Motor neuron (in vitro differentiated cells): ENCODE measurements at regions of chr11 and their contacts with region 1.

Region 1: GRCh38 chr11:113314389-113315301 is at the start of gene TTC12:
- ATAC-seq: peak in 7 of 8 experiments; percentile 89 to 95 (median 92)
- H3K4me3 ChIP-seq: peak within 1 kb of the TSS; percentile 35 to 80 (median 67)
- H3K27ac ChIP-seq: peak within 1 kb of the TSS; percentile 9 to 59
- H3K4me1 ChIP-seq: peaks cover 22 to 37% of the 10 kb centered on the region in 2 donors
- total RNA-seq, gene TTC12: 4.1 to 26.7 (median 8.6) TPM in 7 of 8 experiments, not detected in the other

Region 2: DNA sequence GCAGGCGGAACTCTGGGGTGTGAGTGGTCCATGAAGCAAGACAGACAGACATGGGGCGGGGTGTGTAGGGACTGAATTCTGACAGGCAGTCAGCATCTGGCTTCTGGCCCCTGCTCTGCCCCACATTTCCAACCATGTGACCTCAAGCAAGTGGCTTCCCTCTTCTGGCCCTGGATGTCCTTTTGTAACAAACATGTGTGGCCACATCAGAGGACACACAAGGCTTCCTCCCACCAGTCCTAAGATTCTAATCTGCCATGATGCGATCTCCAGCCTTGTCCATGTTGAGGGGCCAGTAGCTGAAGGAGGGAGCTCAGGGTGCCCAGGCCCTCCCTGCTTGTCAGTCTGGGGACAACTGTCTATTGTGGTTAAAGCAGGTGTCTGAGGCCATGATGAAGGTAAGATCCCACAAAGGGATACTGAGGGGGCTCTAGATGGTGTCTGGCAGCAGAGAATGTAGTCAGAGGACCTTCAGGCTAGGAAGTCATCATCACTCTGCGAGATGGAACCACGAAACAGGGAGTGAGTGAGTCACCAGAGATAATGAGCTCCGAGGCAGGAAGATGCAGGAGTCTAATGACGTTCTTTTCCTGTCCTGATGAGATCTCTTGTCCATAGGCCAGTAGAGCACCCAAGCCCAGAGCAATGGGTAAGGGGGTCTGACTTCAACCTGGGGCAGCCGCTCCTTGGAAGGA is 133.1 kb after region 1 on chr11:
- in situ Hi-C with region 1: loop called in 1 of 9 experiments (anchors 25 kb)
- ATAC-seq: peak in 7 of 8 experiments; percentile 53 to 91 (median 79)
- H3K4me3 ChIP-seq: no peak overlapping the region
- H3K27ac ChIP-seq: peak overlapping the region in 1 of 2 donors; percentile 18
- H3K4me1 ChIP-seq: peaks cover 6 to 15% of the 10 kb centered on the region in 2 donors

Region 3: DNA sequence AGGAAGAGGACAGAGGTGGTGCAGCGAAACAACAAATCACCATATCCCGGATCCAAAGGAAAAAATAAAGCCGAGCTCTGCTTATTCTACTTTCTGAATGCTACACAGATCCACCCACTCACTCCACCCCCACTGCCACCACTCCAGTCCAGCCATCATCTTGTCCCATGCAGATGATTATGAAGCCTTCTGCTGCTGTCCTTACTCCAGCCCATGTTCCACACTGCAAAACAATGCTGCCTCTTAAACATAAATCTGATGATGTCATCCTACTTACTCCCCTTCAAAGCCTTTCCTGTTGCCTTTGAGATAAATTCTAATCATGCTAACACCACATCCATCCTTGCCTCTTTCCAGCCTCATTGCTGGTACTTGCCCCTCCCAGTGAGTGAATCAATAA is 167.0 kb after region 1 on chr11:
- in situ Hi-C with region 1: no loop called
- ATAC-seq: peak in 7 of 8 experiments; percentile 39 to 92 (median 84)
- H3K4me3 ChIP-seq: no peak overlapping the region
- H3K27ac ChIP-seq: peak overlapping the region; percentile 65 to 70
- H3K4me1 ChIP-seq: peaks cover 24 to 38% of the 10 kb centered on the region in 2 donors

Region 4: GRCh38 chr11:113532697-113533424 is 218.2 kb after region 1 on chr11:
- in situ Hi-C with region 1: loop called (anchors 5 to 25 kb)
- ATAC-seq: peak; percentile 65 to 97 (median 78)
- H3K4me3 ChIP-seq: no peak overlapping the region
- H3K27ac ChIP-seq: no peak overlapping the region
- H3K4me1 ChIP-seq: no peaks in the 10 kb centered on the region

Region 5: GRCh38 chr11:113587308-113587739 is 272.7 kb after region 1 on chr11:
- in situ Hi-C with region 1: no loop called
- ATAC-seq: peak in 2 of 8 experiments; percentile 24 to 67
- H3K4me3 ChIP-seq: no peak overlapping the region
- H3K27ac ChIP-seq: no peak overlapping the region
- H3K4me1 ChIP-seq: no peaks in the 10 kb centered on the region

Region 6: DNA sequence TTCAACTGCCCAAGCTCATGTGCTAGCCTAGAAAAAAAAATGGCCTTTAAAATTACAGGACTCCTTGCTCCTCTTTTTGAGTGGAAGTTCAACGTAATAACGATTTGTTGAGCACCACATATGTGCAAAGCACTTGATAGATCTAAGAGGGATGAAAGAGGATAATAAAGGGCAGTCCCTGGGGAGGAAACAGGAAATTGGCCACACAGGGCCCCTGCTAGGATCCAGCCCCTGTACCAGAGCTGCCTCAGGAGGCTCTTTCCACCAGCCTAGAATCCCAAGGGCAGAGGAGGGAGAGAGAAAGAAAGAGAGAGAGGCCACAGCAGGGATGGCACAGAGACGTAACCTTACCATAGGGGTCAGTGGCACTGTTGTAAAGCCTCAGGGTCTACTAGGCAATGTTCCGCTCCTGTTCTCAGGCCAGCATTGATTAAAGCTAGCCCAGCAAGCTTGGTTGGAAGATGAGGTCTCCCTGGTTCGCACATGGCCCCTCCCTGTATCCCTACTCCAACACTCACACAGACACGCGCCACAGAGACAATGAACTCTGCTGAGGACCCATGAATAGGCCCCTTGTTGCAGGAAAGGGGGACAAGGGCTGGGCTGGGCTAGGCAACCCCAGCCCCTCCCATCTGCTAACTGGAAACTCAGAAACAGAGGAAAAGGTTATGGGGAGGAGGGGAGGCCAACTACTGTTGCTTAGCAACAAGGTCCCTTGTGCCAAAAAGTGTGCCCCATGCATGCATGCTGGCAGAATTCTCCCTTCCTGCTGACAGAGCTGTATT is 391.4 kb after region 1 on chr11 and contains the start of gene TMPRSS5:
- in situ Hi-C with region 1: loop called in 1 of 9 experiments (anchors 25 kb)
- ATAC-seq: peak in 5 of 8 experiments; percentile 99
- H3K4me3 ChIP-seq: no peak within 1 kb of the TSS
- H3K27ac ChIP-seq: peak within 1 kb of the TSS in 1 of 2 donors; percentile 46
- H3K4me1 ChIP-seq: peaks cover 10 to 18% of the 10 kb centered on the region in 2 donors
- total RNA-seq, gene TMPRSS5: 0.36 to 6.2 (median 1.7) TPM

Region 7: GRCh38 chr11:113730887-113731726 is 416.5 kb after region 1 on chr11:
- in situ Hi-C with region 1: loop called in 4 of 9 experiments (anchors 25 kb)
- ATAC-seq: peak; percentile 60 to 87 (median 74)
- H3K4me3 ChIP-seq: no peak overlapping the region
- H3K27ac ChIP-seq: no peak overlapping the region
- H3K4me1 ChIP-seq: peaks cover 7 to 20% of the 10 kb centered on the region in 2 donors

Region 8: DNA sequence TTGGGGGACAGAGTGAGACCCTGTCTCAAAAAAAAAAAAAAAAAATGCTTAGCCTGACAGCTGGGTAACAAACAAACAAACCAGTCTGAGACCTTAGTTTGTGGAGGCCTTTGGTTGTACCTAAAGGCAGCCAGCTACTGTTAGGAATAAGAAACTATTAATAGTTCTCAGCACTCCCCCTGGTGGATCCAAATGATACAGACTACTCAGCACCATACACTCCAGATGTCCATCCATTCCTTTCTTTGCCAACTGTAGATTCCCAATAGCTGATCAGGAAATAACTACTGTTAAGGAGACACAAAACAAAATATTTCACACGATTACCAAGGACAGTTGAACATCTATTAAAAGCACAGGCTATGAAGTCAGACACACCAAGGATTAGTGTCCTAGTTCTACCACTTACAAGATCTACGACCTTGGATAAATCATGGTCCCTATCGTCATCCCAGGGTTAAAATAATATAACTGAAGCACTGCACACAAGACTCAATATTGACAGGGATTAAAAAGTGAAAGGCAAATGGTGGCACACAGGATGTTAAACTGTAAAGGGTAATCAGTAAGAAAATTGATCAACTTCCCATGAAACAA is 482.1 kb after region 1 on chr11:
- in situ Hi-C with region 1: loop called in 2 of 9 experiments (anchors 25 kb)
- ATAC-seq: peak; percentile 66 to 99 (median 89)
- H3K4me3 ChIP-seq: no peak overlapping the region
- H3K27ac ChIP-seq: no peak overlapping the region
- H3K4me1 ChIP-seq: no peaks in the 10 kb centered on the region

Region 9: GRCh38 chr11:114262681-114263512 is 948.3 kb after region 1 on chr11:
- in situ Hi-C with region 1: loop called in 1 of 9 experiments (anchors 25 kb)
- ATAC-seq: peak; percentile 34 to 91 (median 59)
- H3K4me3 ChIP-seq: no peak overlapping the region
- H3K27ac ChIP-seq: no peak overlapping the region
- H3K4me1 ChIP-seq: peaks cover 10 to 19% of the 10 kb centered on the region in 2 donors